GM12878 (cell line): ENCODE measurements at regions of chr5 and their contacts with region 1.

Region 1: DNA sequence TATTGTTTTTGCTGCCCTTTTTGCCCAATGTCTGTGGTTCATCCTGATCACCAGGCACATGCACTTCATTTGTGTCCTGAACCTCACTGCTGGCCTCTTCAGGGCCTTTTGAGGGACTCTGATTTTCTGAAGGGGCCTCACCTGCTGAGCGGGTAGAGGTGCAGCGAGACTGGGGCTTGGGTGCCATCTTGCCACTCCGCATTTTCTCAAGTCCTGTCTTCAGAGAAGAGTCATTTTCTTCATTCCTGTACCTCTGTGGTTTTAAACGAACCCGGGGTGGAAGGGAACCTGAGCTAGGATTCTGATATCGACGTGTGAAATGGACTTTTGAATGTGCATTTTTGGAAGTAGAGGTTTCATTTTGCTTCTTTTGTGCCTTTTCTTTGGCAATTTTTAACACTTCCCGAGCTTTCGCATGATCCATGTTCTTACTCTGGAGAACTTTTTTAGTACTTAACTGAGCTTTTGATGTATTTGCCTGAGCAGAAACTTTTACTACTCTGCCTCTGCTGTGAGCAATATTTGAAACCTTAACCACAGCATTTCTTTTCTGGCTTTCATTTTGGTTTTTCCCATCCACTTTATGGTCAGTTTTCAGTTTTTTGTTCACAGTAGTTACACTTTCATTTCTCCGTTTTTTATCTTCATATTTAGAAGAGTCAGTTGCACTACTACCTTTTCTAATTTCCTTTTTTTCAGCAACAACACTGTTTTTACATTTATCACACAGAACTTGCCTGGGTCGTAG is 26.1 kb downstream of the PWWP2A start:
- DNase-seq: peak; percentile 72
- ATAC-seq: peak; percentile 79
- H3K4me3 ChIP-seq: peak overlapping the region; percentile 60
- H3K27ac ChIP-seq: peak overlapping the region; percentile 73
- H3K4me1 ChIP-seq: peaks cover 38% of the 10 kb centered on the region
- H3K27me3 ChIP-seq: no peaks in the 10 kb centered on the region
- CTCF ChIP-seq: no peak
- EP300 ChIP-seq: peak in 1 of 2 experiments; percentile 50; a peak in 1 of 4 replicates
- POLR2A ChIP-seq: no peak
- RAD21 ChIP-seq: no peak

Region 2: DNA sequence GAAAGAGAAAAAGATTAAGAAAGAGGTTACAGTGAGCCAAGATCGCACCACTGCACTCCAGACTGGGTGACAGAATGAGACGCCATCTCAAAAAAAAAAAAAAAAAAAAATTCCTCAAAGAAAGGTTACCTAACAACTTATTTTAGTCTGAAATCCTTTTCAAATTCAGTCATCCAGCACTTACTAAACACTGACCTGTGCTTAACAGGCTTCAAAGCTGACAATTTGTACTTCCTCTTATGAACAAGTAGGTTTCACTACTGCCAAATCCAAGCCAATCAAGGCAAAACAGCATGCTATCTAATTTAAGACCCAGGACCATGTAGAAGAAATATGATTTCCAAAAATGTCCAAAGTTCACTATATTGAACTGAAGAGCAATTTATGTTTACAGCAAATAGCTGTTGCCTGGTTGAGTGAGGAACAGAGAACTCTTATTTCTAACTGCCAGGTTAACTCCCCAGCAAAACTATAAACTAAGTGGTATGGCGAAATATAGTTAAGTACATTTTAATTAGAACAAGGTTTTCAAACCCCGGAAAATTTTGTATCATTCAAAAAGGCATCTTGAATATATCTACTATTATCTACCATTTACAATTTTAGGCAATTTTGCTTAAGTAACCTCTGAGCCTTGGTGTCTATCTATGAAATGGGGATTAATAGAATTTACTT is 12.7 kb after region 1 on chr5:
- CTCF ChIA-PET with region 1: interaction called, 6 read pairs
- POLR2A ChIA-PET with region 1: interaction called, 8 read pairs
- RAD21 ChIA-PET with region 1: interaction called, 7 read pairs
- SMC1A ChIA-PET with region 1: interaction called, 22 read pairs
- in situ Hi-C with region 1: no loop called
- intact Hi-C with region 1: no loop called
- DNase-seq: peak; percentile 61
- ATAC-seq: peak; percentile 89
- H3K4me3 ChIP-seq: no peak overlapping the region
- H3K27ac ChIP-seq: peak overlapping the region; percentile 56
- H3K4me1 ChIP-seq: peaks cover 17% of the 10 kb centered on the region
- H3K27me3 ChIP-seq: no peaks in the 10 kb centered on the region
- CTCF ChIP-seq: no peak
- EP300 ChIP-seq: no peak
- POLR2A ChIP-seq: no peak
- RAD21 ChIP-seq: no peak

Region 3: GRCh38 chr5:160119142-160119904 is 26.2 kb after region 1 on chr5 and contains the start of gene PWWP2A:
- CTCF ChIA-PET with region 1: interaction called, 4 read pairs
- POLR2A ChIA-PET with region 1: interaction called, 3 read pairs
- RAD21 ChIA-PET with region 1: no interaction called
- SMC1A ChIA-PET with region 1: interaction called, 3 read pairs
- in situ Hi-C with region 1: no loop called
- intact Hi-C with region 1: loop called (anchors 2 kb)
- DNase-seq: peak; percentile 100
- ATAC-seq: peak; percentile 96
- H3K4me3 ChIP-seq: peak within 1 kb of the TSS; percentile 92
- H3K27ac ChIP-seq: peak within 1 kb of the TSS; percentile 83
- H3K4me1 ChIP-seq: peaks cover 3% of the 10 kb centered on the region
- H3K27me3 ChIP-seq: no peaks in the 10 kb centered on the region
- CTCF ChIP-seq: no peak
- EP300 ChIP-seq: no peak
- POLR2A ChIP-seq: peak; percentile 86
- RAD21 ChIP-seq: no peak
- polyA plus RNA-seq, gene PWWP2A: 5.7 to 6.9 TPM